Activated CD4-positive, alpha-beta T cell treated with anti-CD3 and anti-CD28 coated beads for 36 hours (primary cell): ENCODE measurements at regions of chr1 and their contacts with region 1.

Region 1: DNA sequence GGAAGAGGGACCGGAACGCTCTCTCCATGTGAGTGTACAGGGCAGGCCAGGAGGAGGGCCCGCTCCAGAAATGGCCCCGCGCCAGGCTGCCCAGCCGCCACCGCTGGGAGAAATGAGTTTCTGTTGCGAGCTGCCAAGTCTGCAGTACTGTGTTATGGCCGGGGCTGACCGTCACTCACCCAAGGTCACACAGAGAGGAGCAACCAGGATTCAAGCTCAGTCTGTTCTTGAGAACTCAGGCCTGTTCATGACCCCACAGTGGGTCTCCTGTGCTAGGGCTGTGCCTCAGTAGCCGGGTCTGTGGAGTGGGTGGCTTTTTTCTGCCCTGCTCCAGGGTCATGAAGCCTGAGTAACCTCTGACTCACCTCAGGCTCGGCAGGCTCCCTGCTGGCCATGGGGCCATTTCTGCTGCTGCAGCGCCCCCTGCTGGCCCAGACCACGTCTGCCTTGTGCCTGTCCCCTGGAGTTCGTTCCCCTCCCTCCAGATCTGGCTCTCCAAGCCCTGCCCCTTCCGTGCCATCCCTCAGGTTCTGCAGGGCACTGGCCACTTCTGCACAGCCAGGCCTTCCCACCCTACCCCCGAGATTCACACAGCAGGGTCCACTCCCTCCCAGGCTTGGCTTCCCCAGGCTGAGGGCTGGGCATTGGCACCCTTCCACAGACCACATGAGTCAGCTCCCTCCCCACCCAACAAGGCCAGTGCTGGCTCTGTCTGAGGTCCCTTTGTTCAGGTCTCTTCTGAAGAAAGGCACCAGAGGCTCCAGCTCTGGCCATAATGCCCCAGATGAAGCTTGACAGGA is 51.8 kb downstream of the EDN2 start:
- DNase-seq: peak; percentile 91
- ATAC-seq: peak; percentile 99
- H3K4me3 Mint-ChIP-seq: no peak overlapping the region
- H3K27ac Mint-ChIP-seq: no peak overlapping the region
- H3K4me1 Mint-ChIP-seq: no peaks in the 10 kb centered on the region
- H3K27me3 Mint-ChIP-seq: peaks cover 26% of the 10 kb centered on the region

Region 2: GRCh38 chr1:41268154-41268770 is 164.4 kb before region 1 on chr1:
- CTCF ChIA-PET with region 1: interaction called, 13 read pairs
- POLR2A ChIA-PET with region 1: no interaction called
- intact Hi-C with region 1: loop called (anchors 1 kb)
- DNase-seq: peak; percentile 80
- ATAC-seq: peak; percentile 57
- H3K4me3 Mint-ChIP-seq: no peak overlapping the region
- H3K27ac Mint-ChIP-seq: no peak overlapping the region
- H3K4me1 Mint-ChIP-seq: no peaks in the 10 kb centered on the region
- H3K27me3 Mint-ChIP-seq: peaks cover 9% of the 10 kb centered on the region

Region 3: DNA sequence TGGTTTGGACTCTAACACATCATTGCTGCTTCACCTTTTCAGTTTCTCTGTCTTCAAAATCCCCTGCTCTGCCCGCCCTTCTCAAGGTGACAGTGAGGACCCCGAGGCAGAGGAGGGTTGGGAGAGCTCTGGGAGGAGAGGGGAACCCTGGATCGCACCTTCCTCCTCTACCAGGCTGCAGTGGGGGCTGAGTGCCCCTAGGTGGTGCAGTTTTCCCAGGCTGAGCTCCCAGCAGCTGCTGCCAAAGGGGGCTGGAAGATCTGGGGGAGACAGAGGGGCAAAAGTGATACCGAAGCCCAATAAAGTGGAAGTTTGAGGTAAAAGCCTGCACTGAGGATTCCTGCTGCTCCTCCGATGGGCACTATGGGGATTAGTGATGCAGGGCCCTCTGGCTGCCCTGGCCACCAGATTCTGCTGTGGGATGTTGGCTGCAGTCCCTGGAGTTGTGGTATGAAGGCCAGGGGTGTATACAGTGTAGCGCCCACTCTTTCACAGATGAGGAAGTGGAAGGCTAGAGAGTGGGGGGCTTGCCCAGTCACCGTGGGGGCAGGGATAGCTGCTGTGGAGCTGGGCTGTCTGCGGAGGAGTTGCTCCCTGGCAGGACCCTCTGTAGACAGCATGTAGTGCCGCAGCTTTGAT is 149.9 kb before region 1 on chr1:
- CTCF ChIA-PET with region 1: interaction called, 10 read pairs
- POLR2A ChIA-PET with region 1: no interaction called
- intact Hi-C with region 1: loop called in 1 of 2 experiments (anchors 1 kb)
- DNase-seq: peak; percentile 57
- ATAC-seq: no peak
- H3K4me3 Mint-ChIP-seq: no peak overlapping the region
- H3K27ac Mint-ChIP-seq: no peak overlapping the region
- H3K4me1 Mint-ChIP-seq: peaks cover 2% of the 10 kb centered on the region
- H3K27me3 Mint-ChIP-seq: peaks cover 32% of the 10 kb centered on the region

Region 4: DNA sequence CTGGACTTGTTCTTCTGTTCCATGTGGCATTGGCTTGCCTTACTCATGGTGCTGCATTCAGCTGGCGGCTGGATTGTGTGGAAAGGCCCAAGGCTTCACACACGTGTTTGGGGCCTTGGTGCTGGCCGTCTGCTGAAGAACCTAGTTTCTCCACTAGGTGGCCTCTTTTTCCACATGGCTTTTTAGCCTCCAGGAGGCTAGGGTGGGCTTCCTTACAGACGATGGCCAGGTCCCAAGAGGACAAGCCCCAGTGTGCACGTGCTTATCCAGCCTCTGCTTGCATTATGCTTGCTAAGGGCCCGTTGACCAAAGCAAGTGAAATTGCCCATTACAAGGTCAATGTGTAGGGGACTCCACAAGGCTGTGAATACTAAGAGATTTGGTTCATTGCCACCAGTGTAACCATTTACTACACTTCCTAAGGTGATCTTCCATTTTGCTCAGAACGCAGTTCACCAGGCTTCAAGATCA is 119.0 kb before region 1 on chr1:
- CTCF ChIA-PET with region 1: interaction called, 5 read pairs
- POLR2A ChIA-PET with region 1: no interaction called
- intact Hi-C with region 1: loop called in 1 of 2 experiments (anchors 1 kb)
- DNase-seq: peak; percentile 36
- ATAC-seq: peak; percentile 39
- H3K4me3 Mint-ChIP-seq: no peak overlapping the region
- H3K27ac Mint-ChIP-seq: no peak overlapping the region
- H3K4me1 Mint-ChIP-seq: no peaks in the 10 kb centered on the region
- H3K27me3 Mint-ChIP-seq: peaks cover 3% of the 10 kb centered on the region

Region 5: GRCh38 chr1:41322835-41323627 is 109.7 kb before region 1 on chr1:
- CTCF ChIA-PET with region 1: interaction called, 19 read pairs
- POLR2A ChIA-PET with region 1: no interaction called
- intact Hi-C with region 1: loop called in 1 of 2 experiments (anchors 1 kb)
- DNase-seq: peak; percentile 62
- ATAC-seq: peak; percentile 76
- H3K4me3 Mint-ChIP-seq: no peak overlapping the region
- H3K27ac Mint-ChIP-seq: no peak overlapping the region
- H3K4me1 Mint-ChIP-seq: no peaks in the 10 kb centered on the region
- H3K27me3 Mint-ChIP-seq: no peaks in the 10 kb centered on the region